Right cardiac atrium (tissue), 5 donors: ENCODE measurements at regions of chr1 and their contacts with region 1.

Region 1: GRCh38 chr1:157878059-157878458 is 36.5 kb upstream of the CD5L start:
- DNase-seq: no peak
- ATAC-seq: peak in 1 of 2 donors; percentile 50
- H3K4me3 ChIP-seq: no peak overlapping the region
- H3K27ac ChIP-seq: no peak overlapping the region
- H3K4me1 ChIP-seq: no peaks in the 10 kb centered on the region
- H3K27me3 ChIP-seq: peaks cover 2% of the 10 kb centered on the region

Region 2: GRCh38 chr1:157948312-157949073 is 70.4 kb after region 1 on chr1:
- intact Hi-C with region 1: loop called (anchors 2 to 5 kb)
- DNase-seq: peak in 2 of 3 donors; percentile 58 to 62
- ATAC-seq: peak; percentile 79 to 89
- H3K4me3 ChIP-seq: no peak overlapping the region
- H3K27ac ChIP-seq: no peak overlapping the region
- H3K4me1 ChIP-seq: no peaks in the 10 kb centered on the region
- H3K27me3 ChIP-seq: peaks cover 3% of the 10 kb centered on the region